Activated CD8-positive, alpha-beta T cell treated with anti-CD3 and anti-CD28 coated beads, Interleukin-2, amount 10 ng/mL, durations not matched to agents 7 days and 5 days (primary cell): ENCODE measurements at regions of chr5 and their contacts with region 1.

Region 1: GRCh38 chr5:126600631-126601511 is at the start of gene PHAX:
- DNase-seq: peak; percentile 79
- ATAC-seq: peak; percentile 95
- H3K4me3 Mint-ChIP-seq: peak within 1 kb of the TSS; percentile 96
- H3K27ac Mint-ChIP-seq: peak within 1 kb of the TSS; percentile 97
- H3K4me1 Mint-ChIP-seq: peaks cover 33% of the 10 kb centered on the region
- H3K27me3 Mint-ChIP-seq: no peaks in the 10 kb centered on the region
- total RNA-seq, gene PHAX: 33.7 to 35.0 TPM

Region 2: DNA sequence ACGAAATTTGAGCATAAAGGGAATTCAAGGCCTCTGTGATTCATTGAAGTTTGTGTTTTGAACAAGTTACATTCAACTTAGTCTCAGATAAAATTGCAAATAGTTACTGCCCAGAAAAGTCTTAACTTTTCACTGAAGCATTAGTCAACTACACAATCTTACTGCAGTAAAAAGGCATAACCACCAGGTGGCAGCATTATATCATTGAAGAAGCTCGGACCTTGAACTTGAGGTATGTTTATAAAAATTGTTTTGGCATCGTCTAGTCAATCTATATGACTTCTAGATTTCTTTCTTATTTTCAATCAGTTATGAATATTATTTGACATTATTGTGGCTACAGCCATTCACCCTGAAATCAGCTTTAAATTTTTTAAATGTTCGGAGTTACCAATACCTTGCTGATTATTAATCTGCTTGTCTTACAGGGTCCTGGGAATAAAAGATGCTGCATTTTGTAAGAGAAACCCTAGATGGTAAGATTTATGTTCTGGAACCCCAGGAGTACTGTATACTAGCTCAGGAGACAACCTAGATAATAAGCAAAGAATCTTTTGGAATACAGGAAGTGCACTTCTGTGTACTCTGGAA is 261.6 kb before region 1 on chr5:
- CTCF ChIA-PET with region 1: interaction called, 14 read pairs
- POLR2A ChIA-PET with region 1: no interaction called
- DNase-seq: peak; percentile 73
- ATAC-seq: no peak
- H3K4me3 Mint-ChIP-seq: no peak overlapping the region
- H3K27ac Mint-ChIP-seq: no peak overlapping the region
- H3K4me1 Mint-ChIP-seq: no peaks in the 10 kb centered on the region
- H3K27me3 Mint-ChIP-seq: peaks cover 12% of the 10 kb centered on the region

Region 3: GRCh38 chr5:126587551-126588390 is 13.1 kb before region 1 on chr5:
- CTCF ChIA-PET with region 1: interaction called, 17 read pairs
- POLR2A ChIA-PET with region 1: no interaction called
- DNase-seq: no peak
- ATAC-seq: no peak
- H3K4me3 Mint-ChIP-seq: no peak overlapping the region
- H3K27ac Mint-ChIP-seq: no peak overlapping the region
- H3K4me1 Mint-ChIP-seq: no peaks in the 10 kb centered on the region
- H3K27me3 Mint-ChIP-seq: peaks cover 4% of the 10 kb centered on the region